CD4-positive, alpha-beta memory T cell (primary cell): ENCODE measurements at regions of chr10 and their contacts with region 1.

Region 1: DNA sequence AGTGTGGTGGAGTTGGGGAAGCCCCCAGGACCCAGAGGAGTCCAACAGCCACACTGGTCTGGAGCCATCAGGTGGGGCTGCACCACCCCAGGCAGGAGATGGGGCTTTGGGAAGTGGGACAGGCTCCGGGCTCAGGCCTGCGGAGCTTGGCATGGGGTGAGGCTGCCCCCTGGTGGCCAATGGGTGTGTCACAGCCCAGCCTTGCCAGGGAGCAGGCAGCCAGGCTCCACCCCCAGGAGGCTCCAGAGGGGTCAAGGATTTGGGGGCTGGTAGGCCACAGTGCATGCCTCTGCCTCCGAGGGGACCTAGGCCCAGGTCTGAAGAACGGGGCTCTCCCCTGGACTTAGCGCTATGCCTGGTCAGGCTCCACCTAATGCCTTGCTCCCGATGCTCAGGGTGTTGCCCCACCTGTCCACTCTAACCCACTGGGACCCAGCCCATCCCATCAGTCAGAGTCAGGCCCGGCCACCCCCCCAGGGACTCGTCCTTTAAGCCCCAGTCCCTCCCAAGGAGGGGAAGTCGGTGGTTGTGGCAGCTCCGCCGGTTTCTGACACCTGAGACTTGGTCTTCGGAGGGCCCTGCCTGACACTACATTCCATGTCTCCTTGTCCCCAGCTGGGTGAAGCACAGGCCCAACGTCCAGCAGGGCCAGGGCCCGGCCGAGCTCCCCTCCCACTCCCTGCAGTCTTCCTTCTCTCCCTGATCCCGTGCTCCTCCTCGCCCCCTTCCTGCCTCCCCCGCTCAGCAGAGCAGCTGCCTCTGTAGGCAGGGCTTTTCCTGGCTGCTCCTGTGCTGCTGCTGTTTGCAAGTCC is 11.3 kb upstream of the SAMD8 start:
- DNase-seq: peak; percentile 63 to 76 (median 71)
- H3K4me3 ChIP-seq: no peak overlapping the region
- H3K4me3 Mint-ChIP-seq: no peak overlapping the region
- H3K27ac ChIP-seq: no peak overlapping the region
- H3K27ac Mint-ChIP-seq: peak overlapping the region in 2 of 7 donors; percentile 21 to 60
- H3K4me1 ChIP-seq: peaks cover 7% of the 10 kb centered on the region
- H3K4me1 Mint-ChIP-seq: peaks cover 0 to 5% (median 0%) of the 10 kb centered on the region in 4 donors
- H3K27me3 ChIP-seq: no peaks in the 10 kb centered on the region
- H3K27me3 Mint-ChIP-seq: no peaks in the 10 kb centered on the region

Region 2: GRCh38 chr10:74244097-74244685 is 856.0 kb before region 1 on chr10:
- CTCF ChIA-PET with region 1: interaction called, 47 read pairs
- POLR2A ChIA-PET with region 1: no interaction called
- intact Hi-C with region 1: loop called (anchors 1 kb)
- DNase-seq: peak in 4 of 5 donors; percentile 33 to 39 (median 37)
- H3K4me3 ChIP-seq: no peak overlapping the region
- H3K4me3 Mint-ChIP-seq: no peak overlapping the region
- H3K27ac ChIP-seq: no peak overlapping the region
- H3K27ac Mint-ChIP-seq: no peak overlapping the region
- H3K4me1 ChIP-seq: no peaks in the 10 kb centered on the region
- H3K4me1 Mint-ChIP-seq: peaks cover 0 to 9% (median 1%) of the 10 kb centered on the region in 4 donors
- H3K27me3 ChIP-seq: no peaks in the 10 kb centered on the region
- H3K27me3 Mint-ChIP-seq: no peaks in the 10 kb centered on the region

Region 3: DNA sequence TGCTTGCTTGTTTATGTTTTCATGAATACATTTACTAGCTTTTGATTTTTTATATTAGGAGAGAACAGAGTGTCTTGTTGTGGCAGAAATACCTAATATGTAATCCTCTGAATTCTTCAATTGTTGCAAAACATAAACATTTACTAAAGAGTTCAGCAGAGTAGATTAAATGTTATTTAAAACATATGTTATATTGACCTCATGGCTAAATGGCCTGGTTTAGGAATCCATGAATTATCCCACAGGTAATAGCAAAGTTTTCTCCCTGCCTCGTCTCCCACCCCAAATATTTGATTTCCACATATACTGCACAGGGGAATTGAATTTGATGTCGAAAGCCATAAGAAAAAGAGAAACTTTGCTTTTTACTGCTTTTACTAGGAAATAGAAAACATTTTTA is 837.3 kb before region 1 on chr10:
- CTCF ChIA-PET with region 1: interaction called, 8 read pairs
- POLR2A ChIA-PET with region 1: no interaction called
- intact Hi-C with region 1: loop called (anchors 1 kb)
- DNase-seq: no peak
- H3K4me3 ChIP-seq: no peak overlapping the region
- H3K4me3 Mint-ChIP-seq: no peak overlapping the region
- H3K27ac ChIP-seq: no peak overlapping the region
- H3K27ac Mint-ChIP-seq: peak overlapping the region in 2 of 7 donors; percentile 19 to 57
- H3K4me1 ChIP-seq: no peaks in the 10 kb centered on the region
- H3K4me1 Mint-ChIP-seq: peaks cover 0 to 12% (median 7%) of the 10 kb centered on the region in 4 donors
- H3K27me3 ChIP-seq: no peaks in the 10 kb centered on the region
- H3K27me3 Mint-ChIP-seq: no peaks in the 10 kb centered on the region

Region 4: GRCh38 chr10:74738985-74739567 is 361.1 kb before region 1 on chr10:
- CTCF ChIA-PET with region 1: no interaction called
- POLR2A ChIA-PET with region 1: no interaction called
- intact Hi-C with region 1: loop called (anchors 2 kb)
- DNase-seq: peak in 4 of 5 donors; percentile 23 to 36 (median 32)
- H3K4me3 ChIP-seq: no peak overlapping the region
- H3K4me3 Mint-ChIP-seq: peak overlapping the region in 6 of 8 donors; percentile 28 to 65 (median 49)
- H3K27ac ChIP-seq: no peak overlapping the region
- H3K27ac Mint-ChIP-seq: peak overlapping the region; percentile 63 to 89 (median 81)
- H3K4me1 ChIP-seq: peaks cover 14% of the 10 kb centered on the region
- H3K4me1 Mint-ChIP-seq: peaks cover 11 to 20% (median 17%) of the 10 kb centered on the region in 4 donors
- H3K27me3 ChIP-seq: no peaks in the 10 kb centered on the region
- H3K27me3 Mint-ChIP-seq: no peaks in the 10 kb centered on the region

Region 5: GRCh38 chr10:75042292-75042974 is 57.7 kb before region 1 on chr10:
- CTCF ChIA-PET with region 1: no interaction called
- POLR2A ChIA-PET with region 1: no interaction called
- intact Hi-C with region 1: no loop called
- DNase-seq: no peak
- H3K4me3 ChIP-seq: no peak overlapping the region
- H3K4me3 Mint-ChIP-seq: no peak overlapping the region
- H3K27ac ChIP-seq: no peak overlapping the region
- H3K27ac Mint-ChIP-seq: peak overlapping the region in 3 of 7 donors; percentile 2 to 35 (median 17)
- H3K4me1 ChIP-seq: no peaks in the 10 kb centered on the region
- H3K4me1 Mint-ChIP-seq: peaks cover 0 to 15% (median 7%) of the 10 kb centered on the region in 4 donors
- H3K27me3 ChIP-seq: no peaks in the 10 kb centered on the region
- H3K27me3 Mint-ChIP-seq: peaks cover 0 to 2% of the 10 kb centered on the region in 2 donors

Region 6: GRCh38 chr10:75145590-75145989 is 45.4 kb after region 1 on chr10:
- CTCF ChIA-PET with region 1: no interaction called
- POLR2A ChIA-PET with region 1: no interaction called
- intact Hi-C with region 1: no loop called
- DNase-seq: no peak
- H3K4me3 ChIP-seq: no peak overlapping the region
- H3K4me3 Mint-ChIP-seq: no peak overlapping the region
- H3K27ac ChIP-seq: no peak overlapping the region
- H3K27ac Mint-ChIP-seq: peak overlapping the region in 1 of 7 donors; percentile 64
- H3K4me1 ChIP-seq: peaks cover 23% of the 10 kb centered on the region
- H3K4me1 Mint-ChIP-seq: peaks cover 25 to 46% (median 31%) of the 10 kb centered on the region in 4 donors
- H3K27me3 ChIP-seq: no peaks in the 10 kb centered on the region
- H3K27me3 Mint-ChIP-seq: no peaks in the 10 kb centered on the region

Region 7: DNA sequence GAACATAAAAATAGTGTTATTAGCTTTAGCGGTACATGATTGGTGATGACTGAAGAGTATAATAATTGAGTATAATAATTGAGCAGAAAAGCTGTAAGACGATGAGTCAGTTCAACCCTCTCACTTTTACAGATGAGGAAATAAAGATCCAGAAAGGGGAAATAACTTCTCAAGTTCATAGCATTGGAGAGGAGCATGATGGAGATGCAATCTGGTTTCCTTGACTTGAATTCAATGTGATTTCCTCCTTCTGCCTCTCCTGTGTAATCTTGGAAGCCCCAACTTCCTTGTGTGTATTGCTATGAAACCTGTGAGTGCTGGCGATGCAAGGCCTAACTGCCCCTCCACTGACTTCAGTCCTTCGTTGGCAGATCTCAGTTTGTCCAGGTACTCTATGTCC is 596.4 kb after region 1 on chr10:
- CTCF ChIA-PET with region 1: no interaction called
- POLR2A ChIA-PET with region 1: no interaction called
- intact Hi-C with region 1: no loop called
- DNase-seq: no peak
- H3K4me3 ChIP-seq: no peak overlapping the region
- H3K4me3 Mint-ChIP-seq: no peak overlapping the region
- H3K27ac ChIP-seq: no peak overlapping the region
- H3K27ac Mint-ChIP-seq: no peak overlapping the region
- H3K4me1 ChIP-seq: no peaks in the 10 kb centered on the region
- H3K4me1 Mint-ChIP-seq: no peaks in the 10 kb centered on the region
- H3K27me3 ChIP-seq: no peaks in the 10 kb centered on the region
- H3K27me3 Mint-ChIP-seq: peaks cover 0 to 4% of the 10 kb centered on the region in 2 donors